CD8-positive, alpha-beta memory T cell (primary cell): ENCODE measurements at regions of chr1 and their contacts with region 1.

Region 1: DNA sequence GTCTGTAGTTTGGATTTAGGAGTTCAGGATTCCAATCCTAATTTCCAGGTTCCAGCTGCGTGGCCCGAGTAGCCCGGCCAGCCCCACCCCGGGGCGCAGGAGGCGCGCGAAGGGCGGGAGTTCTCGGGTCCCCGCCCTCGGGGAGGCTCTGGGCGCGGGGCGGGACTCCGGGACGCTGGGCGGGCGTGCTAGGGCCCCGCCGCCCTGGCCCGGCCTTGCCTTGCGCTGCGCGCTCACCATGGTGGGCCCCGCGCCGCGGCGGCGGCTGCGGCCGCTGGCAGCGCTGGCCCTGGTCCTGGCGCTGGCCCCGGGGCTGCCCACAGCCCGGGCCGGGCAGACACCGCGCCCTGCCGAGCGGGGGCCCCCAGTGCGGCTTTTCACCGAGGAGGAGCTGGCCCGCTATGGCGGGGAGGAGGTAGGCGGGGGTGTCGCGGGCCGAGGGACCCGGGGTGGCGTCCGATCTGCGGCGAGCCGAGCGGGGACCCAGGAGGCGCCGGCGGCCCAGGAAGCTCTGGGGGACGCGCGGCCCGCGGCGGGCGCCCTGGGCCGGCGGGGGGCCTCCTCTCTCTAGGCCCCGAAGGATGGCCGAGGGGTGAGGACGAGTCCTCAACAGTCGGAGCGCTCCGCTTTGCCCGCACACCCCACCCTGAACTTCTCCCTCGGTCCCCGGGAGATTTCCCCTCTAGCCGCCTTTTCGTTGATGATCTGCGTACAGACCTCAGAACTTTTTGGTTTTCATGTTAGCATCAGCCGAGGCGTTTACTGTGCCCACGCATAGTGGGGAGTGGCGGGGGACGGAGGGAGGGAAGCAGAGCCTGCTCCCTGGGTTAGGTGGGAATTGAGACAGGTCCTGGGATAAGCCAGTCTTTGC is at the start of gene NENF:
- DNase-seq: peak; percentile 60 to 81 (median 72)
- H3K4me3 ChIP-seq: peak within 1 kb of the TSS; percentile 67
- H3K4me3 Mint-ChIP-seq: peak within 1 kb of the TSS; percentile 78 to 91 (median 82)
- H3K27ac ChIP-seq: peak within 1 kb of the TSS; percentile 64
- H3K27ac Mint-ChIP-seq: peak within 1 kb of the TSS in 6 of 8 donors; percentile 32 to 96 (median 72)
- H3K4me1 ChIP-seq: peaks cover 25% of the 10 kb centered on the region
- H3K4me1 Mint-ChIP-seq: peaks cover 22 to 42% (median 37%) of the 10 kb centered on the region in 3 donors
- H3K27me3 ChIP-seq: no peaks in the 10 kb centered on the region
- H3K27me3 Mint-ChIP-seq: peaks cover 0 to 4% of the 10 kb centered on the region in 2 donors
- total RNA-seq, gene NENF: 45.5 to 47.9 TPM

Region 2: GRCh38 chr1:212414328-212415106 is 18.4 kb before region 1 on chr1 and contains the start of gene PACC1:
- CTCF ChIA-PET with region 1: no interaction called
- POLR2A ChIA-PET with region 1: interaction called, 10 read pairs
- DNase-seq: peak; percentile 80 to 94 (median 90)
- H3K4me3 ChIP-seq: peak within 1 kb of the TSS; percentile 90
- H3K4me3 Mint-ChIP-seq: peak within 1 kb of the TSS; percentile 90 to 98 (median 92)
- H3K27ac ChIP-seq: peak within 1 kb of the TSS; percentile 55
- H3K27ac Mint-ChIP-seq: peak within 1 kb of the TSS; percentile 69 to 99 (median 94)
- H3K4me1 ChIP-seq: peaks cover 25% of the 10 kb centered on the region
- H3K4me1 Mint-ChIP-seq: peaks cover 33 to 41% (median 36%) of the 10 kb centered on the region in 3 donors
- H3K27me3 ChIP-seq: no peaks in the 10 kb centered on the region
- H3K27me3 Mint-ChIP-seq: no peaks in the 10 kb centered on the region
- total RNA-seq, gene PACC1: 16.9 to 17.8 TPM